Common myeloid progenitor, CD34-positive (primary cell): ENCODE measurements at regions of chr11 and their contacts with region 1.

Region 1: GRCh38 chr11:73760679-73761402 is at the start of gene RAB6A:
- DNase-seq: peak; percentile 100
- H3K4me3 ChIP-seq: peak within 1 kb of the TSS; percentile 82 to 97 (median 94)
- H3K27ac ChIP-seq: peak within 1 kb of the TSS; percentile 33 to 87
- H3K4me1 ChIP-seq: peaks cover 0 to 19% (median 11%) of the 10 kb centered on the region in 4 experiments
- H3K27me3 ChIP-seq: no peaks in the 10 kb centered on the region

Region 2: GRCh38 chr11:73779084-73779902 is 18.5 kb after region 1 on chr11:
- CTCF ChIA-PET with region 1: interaction called, 28 read pairs
- POLR2A ChIA-PET with region 1: interaction called, 10 read pairs
- DNase-seq: peak; percentile 97 to 99 (median 99)
- H3K4me3 ChIP-seq: peak overlapping the region; percentile 32 to 97 (median 79)
- H3K27ac ChIP-seq: peak overlapping the region; percentile 81 to 93
- H3K4me1 ChIP-seq: peaks cover 0 to 13% (median 8%) of the 10 kb centered on the region in 4 experiments
- H3K27me3 ChIP-seq: no peaks in the 10 kb centered on the region